ENCODE measurements at regions of chr14 and their contacts with region 1.

Region 1: DNA sequence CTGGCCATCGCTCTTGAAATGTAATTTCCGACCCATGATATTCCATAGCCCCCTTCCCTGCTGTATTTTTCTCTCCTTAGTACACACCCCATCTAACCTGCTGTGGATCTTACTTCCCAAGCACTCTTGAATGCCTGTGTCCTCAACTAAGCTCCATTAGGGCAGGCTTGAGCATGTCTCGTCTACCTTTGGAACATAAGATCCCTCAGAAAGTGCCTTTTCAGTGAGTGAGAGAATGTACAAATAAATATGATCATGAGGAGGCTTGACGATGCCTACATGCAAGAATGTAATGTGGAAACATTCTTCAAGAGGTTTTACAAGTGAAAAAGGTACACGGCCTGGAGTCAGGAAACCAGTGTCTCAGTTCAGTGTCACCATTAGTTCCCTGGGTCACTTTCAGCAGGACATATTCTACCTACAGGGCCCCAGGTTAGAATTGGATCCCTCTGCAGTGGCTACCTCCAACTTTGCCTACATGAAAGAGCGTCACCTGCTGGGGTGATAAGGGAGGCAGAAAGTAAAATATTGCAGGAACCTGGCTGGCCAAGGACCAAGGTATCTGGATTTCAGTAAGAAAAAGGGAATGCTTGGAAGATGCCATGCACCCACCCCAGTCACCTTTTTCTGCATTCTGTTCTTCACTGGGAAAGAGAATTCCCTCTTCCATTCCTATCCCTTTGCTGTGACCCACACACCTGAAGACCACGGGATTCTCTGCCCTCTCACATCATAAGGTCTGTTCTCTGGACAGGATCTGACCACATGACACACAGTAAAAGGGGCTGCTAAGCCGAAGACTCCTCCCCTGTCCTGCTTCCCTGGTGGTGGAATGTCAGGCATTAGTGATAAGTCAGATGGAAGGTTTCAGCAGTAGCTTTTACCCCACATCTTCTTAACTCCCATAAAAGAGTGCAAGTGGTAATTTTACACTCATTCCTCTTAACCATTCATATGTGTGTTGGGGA is 24.6 kb upstream of the SERPINA1 start:
- DNase-seq: no peak

Region 2: DNA sequence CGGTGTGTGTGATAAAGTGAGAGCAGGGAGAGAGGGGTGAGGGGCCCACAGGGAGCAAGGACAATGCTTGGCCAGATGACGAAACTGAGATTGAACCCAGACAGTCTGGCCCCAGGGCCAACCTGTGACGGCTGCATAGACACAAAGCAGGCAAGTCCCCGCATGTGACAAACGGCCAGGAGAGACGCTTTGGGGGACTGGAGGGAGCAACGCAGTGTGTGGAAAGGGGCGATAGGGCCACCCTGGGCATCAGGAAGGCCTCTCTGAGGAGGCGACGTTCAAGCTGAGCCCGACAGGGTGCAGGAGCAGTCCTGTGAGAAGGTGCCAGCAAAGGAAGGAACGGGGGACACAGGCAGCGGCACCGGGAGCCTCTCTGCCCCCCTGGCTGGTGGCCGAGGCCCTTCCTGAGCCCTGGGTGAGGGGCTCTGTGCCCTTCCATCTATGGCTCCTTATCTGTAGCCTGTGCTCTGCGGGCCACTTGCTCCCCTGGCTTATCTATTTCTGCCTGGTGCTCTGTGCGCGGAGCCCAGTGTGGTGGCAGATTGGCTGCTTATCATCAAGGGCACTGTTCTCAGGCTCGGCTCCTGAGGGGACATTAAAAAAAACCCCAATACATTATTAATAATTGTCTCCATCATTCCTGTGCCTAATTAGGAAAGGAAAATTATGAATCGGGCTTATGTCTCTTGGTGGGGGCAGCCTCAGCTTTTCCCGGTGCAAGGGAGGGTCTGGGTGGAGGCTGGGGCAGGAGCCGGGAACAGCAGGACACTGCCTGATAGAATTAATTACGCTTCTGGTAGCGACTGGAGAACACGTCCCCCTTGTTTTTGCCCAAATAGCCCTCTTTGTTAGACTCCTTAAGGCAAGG is 664.5 kb before region 1 on chr14:
- intact Hi-C with region 1: no loop called
- DNase-seq: no peak

Region 3: GRCh38 chr14:94355191-94355797 is 57.7 kb before region 1 on chr14:
- intact Hi-C with region 1: no loop called
- DNase-seq: peak; percentile 86

Region 4: DNA sequence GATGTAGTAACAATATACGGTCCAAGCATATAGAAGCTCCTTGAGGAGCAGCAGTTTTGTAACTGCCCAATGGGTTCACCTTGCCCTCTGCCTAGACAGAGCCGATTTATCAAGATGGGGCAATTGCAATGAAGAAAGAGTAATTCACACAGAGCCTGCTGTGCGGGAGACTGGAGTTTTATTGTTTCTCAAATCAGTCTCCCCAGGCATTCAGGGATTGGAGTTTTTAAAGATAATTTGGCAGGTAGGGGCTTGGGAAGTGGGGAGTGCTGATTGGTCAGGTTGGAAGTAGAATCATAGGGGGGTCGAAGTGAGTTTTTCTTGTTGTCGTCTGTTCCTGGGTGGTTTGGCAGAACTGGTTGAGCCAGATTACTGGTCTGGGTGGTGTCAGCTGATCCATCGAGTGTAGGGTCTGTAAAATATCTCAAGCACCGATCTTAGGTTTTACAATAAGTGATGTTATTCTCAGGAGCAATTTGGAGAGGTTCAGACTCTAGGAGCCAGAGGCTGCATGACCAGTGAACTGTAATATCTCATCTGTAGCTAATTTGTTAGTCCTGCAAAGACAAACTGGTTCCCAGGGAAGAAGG is 15.0 kb before region 1 on chr14:
- intact Hi-C with region 1: loop called in 1 of 2 experiments (anchors 1 kb)
- DNase-seq: no peak

Region 5: GRCh38 chr14:94448071-94448808 is 35.3 kb after region 1 on chr14:
- intact Hi-C with region 1: no loop called
- DNase-seq: no peak